ENCODE measurements at regions of chr1 and their contacts with region 1.

Region 1: DNA sequence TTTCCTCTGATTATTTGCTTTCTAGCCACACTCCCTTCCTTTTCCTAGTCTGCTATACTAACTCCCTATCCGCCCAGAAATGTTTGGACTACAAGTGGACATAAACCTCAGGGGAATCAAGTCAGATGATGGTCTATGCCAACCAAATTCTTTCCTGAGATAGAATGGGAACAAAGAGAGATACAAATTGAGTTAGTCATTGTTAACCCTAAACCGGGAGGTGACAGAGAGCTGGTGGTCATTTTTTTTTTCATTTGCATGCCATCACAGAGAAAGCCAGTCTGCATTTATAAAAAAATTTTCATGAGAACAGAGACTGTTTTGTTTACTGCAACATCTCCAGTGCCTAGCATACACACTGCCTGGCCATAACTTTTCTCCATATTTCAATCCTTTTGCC is 35.0 kb downstream of the MYSM1 start:
- DNase-seq: no peak
- H3K4me3 ChIP-seq: no peak overlapping the region
- H3K27ac ChIP-seq: no peak overlapping the region
- H3K4me1 ChIP-seq: no peaks in the 10 kb centered on the region
- H3K27me3 ChIP-seq: no peaks in the 10 kb centered on the region
- CTCF ChIP-seq: no peak
- POLR2A ChIP-seq: no peak

Region 2: DNA sequence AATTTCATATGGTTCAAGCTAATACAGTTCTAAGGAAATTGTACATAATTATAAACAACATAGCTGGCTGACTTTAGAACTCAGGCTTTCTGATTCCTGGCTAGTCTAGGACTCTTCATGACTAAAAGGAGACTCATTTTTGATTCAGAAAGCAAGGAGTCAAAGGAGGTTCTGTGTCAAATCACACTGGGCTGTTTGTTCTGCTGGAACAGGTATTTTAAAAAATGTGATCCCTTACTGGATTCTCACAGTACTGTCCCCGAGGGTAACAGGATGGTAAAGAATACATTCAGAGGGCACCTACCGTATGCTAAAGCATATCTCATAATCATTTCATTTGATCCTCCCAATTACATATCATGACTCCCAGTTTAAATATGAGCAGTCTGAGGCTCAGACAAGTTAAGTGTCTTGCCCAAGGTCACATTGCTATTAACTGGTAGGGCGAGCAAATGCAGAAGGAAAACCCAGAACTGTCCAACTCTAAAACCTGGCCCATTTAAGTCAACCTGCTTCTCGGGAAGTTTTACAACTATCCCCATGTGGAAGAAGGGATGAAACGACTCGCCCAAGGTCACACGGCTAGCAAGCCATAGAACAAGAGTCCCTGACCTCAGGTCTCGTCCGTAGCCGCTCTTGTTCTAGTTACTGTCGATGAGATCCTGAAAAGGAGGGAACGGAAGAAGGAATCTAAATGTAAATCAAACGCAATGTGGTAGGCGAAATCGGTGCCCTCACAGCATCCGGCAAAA is 34.3 kb after region 1 on chr1:
- intact Hi-C with region 1: loop called in 1 of 2 experiments (anchors 5 kb)
- DNase-seq: peak in 5 of 7 donors; percentile 22 to 39 (median 31)
- H3K4me3 ChIP-seq: peak overlapping the region; percentile 78 to 100 (median 92)
- H3K27ac ChIP-seq: peak overlapping the region; percentile 48 to 89 (median 82)
- H3K4me1 ChIP-seq: peaks cover 10 to 29% of the 10 kb centered on the region in 2 donors
- H3K27me3 ChIP-seq: no peaks in the 10 kb centered on the region
- CTCF ChIP-seq: no peak
- POLR2A ChIP-seq: no peak

Measured in adrenal gland (tissue), 19 donors.